ENCODE measurements at regions of chr12 and their contacts with region 1.

Region 1: DNA sequence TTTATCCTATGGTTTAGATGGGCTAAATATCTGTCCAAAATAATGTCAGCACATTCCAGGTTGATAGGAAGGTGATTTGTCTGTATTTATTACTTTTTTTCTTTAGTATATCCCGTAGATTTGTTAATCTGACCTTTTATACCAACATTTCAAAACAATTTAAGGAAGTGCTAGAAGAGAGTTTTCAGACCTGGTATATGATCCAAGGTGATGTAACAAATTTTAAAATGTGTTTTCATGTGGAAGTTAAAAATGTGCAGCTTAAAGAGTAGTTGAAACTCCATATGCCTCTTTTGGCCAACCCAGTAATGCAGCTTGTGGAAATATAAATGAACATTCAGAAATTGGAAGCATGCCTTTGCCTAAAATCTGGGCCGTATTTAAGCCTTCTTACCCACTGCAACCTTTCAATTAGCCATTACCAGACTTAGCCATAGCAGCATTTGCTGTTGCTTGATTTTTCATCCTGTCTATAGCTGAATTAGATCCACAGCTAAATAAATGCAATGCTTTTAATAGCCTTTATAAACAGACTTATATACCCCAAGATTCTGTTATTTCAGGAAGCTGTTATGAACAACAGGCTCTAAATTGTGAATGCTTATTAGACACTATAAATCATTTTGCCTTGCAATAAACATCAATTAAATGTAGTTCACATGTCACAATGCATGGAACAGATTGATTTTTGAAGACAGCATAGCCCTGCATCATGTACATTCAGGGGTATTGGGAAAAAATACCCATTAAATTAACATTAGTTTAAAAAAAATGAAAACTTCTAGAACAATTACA is 271.2 kb downstream of the PDZRN4 start:
- DNase-seq: no peak
- H3K4me3 ChIP-seq: no peak overlapping the region
- H3K27ac ChIP-seq: no peak overlapping the region
- H3K4me1 ChIP-seq: no peaks in the 10 kb centered on the region
- H3K27me3 ChIP-seq: no peaks in the 10 kb centered on the region
- CTCF ChIP-seq: no peak
- EP300 ChIP-seq: no peak
- POLR2A ChIP-seq: no peak

Region 2: DNA sequence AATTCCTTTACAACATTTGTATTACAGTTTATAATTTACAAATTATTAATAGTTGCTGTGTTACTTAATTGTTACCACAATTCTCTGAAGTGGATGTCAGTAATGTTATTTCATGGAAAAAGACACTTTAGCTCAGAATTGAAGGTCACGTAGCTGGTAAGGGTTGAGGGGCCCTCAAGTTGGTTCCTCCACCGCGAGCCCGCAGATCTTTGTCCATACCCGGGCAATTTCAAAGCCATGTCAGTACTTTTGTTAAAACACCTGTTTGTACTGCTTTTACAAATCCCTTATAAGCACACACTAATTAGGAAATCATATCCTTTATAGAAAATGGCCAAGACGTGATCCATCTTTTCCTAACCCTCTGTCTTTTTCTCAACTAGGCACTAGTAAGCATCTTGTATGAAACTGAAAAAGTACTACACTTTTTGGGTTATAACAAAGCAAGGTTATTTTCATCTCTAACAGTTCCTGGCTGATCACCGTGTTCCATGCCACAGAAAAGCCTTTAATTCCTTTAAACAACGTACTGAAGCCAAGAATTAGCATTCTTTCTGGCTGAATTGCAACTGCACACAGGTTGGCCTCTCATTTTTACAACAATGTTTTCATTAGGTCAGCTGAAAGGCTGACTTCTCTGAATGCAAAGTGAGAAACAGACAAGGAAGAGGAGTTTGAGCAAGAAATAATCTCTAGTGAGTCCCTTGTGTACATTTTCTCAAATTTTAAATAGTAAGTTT is 691.0 kb before region 1 on chr12:
- intact Hi-C with region 1: loop called in 1 of 4 experiments (anchors 5 kb)
- DNase-seq: peak in 1 of 5 donors; percentile 15
- H3K4me3 ChIP-seq: no peak overlapping the region
- H3K27ac ChIP-seq: no peak overlapping the region
- H3K4me1 ChIP-seq: peaks cover 3% of the 10 kb centered on the region
- H3K27me3 ChIP-seq: no peaks in the 10 kb centered on the region
- CTCF ChIP-seq: no peak
- EP300 ChIP-seq: no peak
- POLR2A ChIP-seq: no peak

Region 3: GRCh38 chr12:41612892-41613557 is 153.7 kb after region 1 on chr12:
- intact Hi-C with region 1: no loop called
- DNase-seq: no peak
- H3K4me3 ChIP-seq: no peak overlapping the region
- H3K27ac ChIP-seq: no peak overlapping the region
- H3K4me1 ChIP-seq: no peaks in the 10 kb centered on the region
- H3K27me3 ChIP-seq: no peaks in the 10 kb centered on the region
- CTCF ChIP-seq: no peak
- EP300 ChIP-seq: no peak
- POLR2A ChIP-seq: no peak

Region 4: DNA sequence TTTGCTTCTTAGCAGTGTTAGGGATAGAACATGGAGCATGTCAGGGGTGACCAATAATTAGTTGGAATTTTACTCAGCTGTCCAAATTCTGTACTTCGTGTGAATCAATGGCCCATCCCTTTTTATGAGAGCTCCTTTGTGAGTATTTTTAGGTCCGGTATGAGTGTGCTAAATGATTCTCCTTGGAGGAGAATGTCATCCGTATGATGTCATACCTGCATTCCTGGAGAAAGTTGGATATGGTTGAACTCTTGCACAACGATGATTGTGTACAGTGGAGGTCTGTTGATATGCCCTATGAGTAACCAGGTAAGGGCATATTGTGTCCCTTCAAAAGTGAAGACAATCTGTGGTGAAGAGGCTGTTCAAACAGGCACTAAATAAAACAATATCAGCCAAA is 284.5 kb after region 1 on chr12:
- intact Hi-C with region 1: no loop called
- DNase-seq: no peak
- H3K4me3 ChIP-seq: no peak overlapping the region
- H3K27ac ChIP-seq: no peak overlapping the region
- H3K4me1 ChIP-seq: no peaks in the 10 kb centered on the region
- H3K27me3 ChIP-seq: no peaks in the 10 kb centered on the region
- CTCF ChIP-seq: no peak
- EP300 ChIP-seq: no peak
- POLR2A ChIP-seq: no peak

Measured in ovary (tissue), 10 donors.